ENCODE measurements at regions of chr15 and their contacts with region 1.

Region 1: GRCh38 chr15:90529371-90530249 is at the start of gene CRTC3:
- DNase-seq: peak; percentile 61
- H3K4me3 Mint-ChIP-seq: peak within 1 kb of the TSS; percentile 95
- H3K27ac Mint-ChIP-seq: peak within 1 kb of the TSS; percentile 90
- H3K4me1 Mint-ChIP-seq: peaks cover 50% of the 10 kb centered on the region
- H3K27me3 Mint-ChIP-seq: no peaks in the 10 kb centered on the region
- total RNA-seq, gene CRTC3: 85.1 to 90.7 TPM

Region 2: DNA sequence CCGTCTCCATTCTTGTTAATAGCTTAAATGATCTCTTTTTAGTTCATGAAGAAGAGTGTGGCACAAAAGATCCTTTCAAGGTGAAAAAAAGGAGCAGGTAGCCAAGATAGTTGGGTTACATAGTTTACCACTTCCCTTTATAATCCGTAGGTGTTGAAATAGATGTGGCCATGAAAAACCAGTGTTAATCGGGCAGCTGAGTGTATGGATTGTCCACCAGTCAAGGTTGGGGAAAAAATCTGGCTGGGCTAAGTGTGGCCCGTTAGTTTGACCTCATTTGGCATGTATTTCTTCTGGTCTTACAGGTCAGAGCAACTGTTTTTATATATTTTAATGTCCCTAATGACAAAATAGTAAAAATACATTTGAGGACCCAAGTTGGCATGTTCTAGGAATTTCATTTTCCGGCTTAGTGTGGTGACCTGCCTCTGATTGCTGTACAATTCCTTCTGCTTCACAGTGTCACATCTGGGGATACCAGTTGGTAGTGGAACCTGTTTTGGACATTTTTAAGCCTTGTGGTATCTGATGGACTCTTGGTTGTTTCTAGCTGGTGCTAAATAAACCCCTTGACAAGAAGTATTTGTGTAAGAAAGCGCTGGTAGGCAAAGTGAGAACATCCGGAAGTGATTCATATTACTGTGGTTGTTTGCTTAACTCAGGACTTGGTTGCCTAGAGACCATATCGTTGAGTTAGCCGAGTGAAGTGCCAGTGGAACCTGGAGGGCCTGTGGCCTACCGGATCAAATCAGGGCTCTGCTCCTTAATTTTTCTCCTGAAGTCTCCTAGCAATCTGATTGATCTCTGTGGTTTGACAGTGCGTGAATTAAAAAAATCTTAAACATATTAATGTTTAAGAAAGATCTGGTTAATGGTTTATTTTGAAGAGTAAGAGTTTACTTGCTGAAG is 128.9 kb before region 1 on chr15:
- CTCF ChIA-PET with region 1: no interaction called
- POLR2A ChIA-PET with region 1: no interaction called
- DNase-seq: peak; percentile 84
- H3K4me3 Mint-ChIP-seq: peak overlapping the region; percentile 59
- H3K27ac Mint-ChIP-seq: peak overlapping the region; percentile 91
- H3K4me1 Mint-ChIP-seq: peaks cover 62% of the 10 kb centered on the region
- H3K27me3 Mint-ChIP-seq: no peaks in the 10 kb centered on the region

Region 3: DNA sequence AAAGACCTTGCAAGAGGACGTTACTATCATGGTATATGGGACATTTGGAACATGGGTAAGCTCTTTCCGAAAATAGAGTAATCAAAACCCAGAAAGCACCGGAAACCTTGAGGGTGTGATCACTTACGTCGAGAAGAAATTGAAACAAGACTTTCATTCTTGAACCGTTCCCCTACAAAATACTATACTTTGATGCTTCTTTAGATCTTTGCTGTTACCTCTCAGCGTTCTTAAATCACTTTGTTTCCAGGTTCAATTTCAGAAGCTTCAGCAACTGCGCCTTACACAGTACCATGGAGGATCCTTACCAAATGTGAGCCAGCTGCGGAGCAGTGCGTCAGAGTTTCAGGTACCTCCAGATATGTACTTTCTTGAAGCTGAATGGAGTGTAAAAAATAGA is 10.2 kb after region 1 on chr15:
- CTCF ChIA-PET with region 1: interaction called, 15 read pairs
- POLR2A ChIA-PET with region 1: interaction called, 5 read pairs
- DNase-seq: peak; percentile 57
- H3K4me3 Mint-ChIP-seq: peak overlapping the region; percentile 88
- H3K27ac Mint-ChIP-seq: peak overlapping the region; percentile 98
- H3K4me1 Mint-ChIP-seq: peaks cover 79% of the 10 kb centered on the region
- H3K27me3 Mint-ChIP-seq: no peaks in the 10 kb centered on the region

Measured in activated CD4-positive, alpha-beta T cell treated with anti-CD3 and anti-CD28 coated beads, Interleukin-2, amount 10 ng/mL, durations not matched to agents 7 days and 5 days (primary cell).